Activated CD8-positive, alpha-beta T cell treated with anti-CD3 and anti-CD28 coated beads, Interleukin-2, amount 10 ng/mL, durations not matched to agents 7 days and 5 days (primary cell): ENCODE measurements at regions of chr9 and their contacts with region 1.

Region 1: DNA sequence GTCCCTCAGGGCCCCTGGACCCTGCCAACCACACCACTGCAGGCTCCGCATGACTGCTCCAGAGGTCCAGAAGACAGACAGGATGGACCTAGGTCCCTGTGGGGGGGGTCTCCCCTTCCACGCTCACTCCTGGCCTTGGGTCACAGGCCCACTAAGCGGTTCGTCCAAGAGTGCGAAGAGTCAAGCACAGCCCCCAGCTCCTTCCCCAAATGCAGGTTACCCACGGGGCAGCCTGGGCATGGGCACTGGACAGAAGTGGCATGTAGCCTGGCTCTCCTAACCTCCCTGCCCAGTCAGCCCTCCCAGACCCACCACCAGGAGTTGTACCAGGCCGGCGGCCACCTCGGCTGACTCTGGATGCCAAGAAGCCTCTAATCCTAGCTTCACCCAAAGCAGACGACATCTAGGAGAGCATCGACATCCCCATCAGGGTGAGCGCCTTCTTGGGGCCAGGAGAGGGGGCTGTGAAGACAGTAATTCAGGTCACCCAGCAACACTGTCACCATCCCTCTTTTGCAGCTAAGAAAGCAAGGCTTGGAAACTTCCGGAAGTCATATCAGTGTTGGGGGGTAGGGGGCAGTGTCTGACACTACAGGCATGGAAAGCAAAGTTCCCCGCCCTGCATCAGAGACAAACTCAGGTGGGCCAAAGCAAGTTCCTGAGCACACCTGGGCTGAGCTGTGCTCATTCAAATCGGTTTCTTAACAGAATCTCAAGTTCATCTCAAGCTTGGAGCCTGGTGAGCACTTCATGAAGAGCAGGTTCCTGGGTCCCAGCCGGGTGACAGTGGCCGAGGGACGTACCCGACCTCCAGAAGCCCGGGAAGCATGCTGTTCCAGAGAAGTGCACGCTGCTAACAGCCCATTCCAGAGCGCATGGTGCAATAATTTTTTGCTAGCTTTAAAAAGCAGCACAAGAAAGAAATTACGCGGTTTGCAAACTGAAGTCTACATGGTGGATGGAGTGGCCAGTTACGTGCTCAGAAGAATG is 68.7 kb downstream of the SEMA4D start:
- DNase-seq: peak; percentile 79
- ATAC-seq: peak; percentile 20
- H3K4me3 Mint-ChIP-seq: no peak overlapping the region
- H3K27ac Mint-ChIP-seq: peak overlapping the region; percentile 88
- H3K4me1 Mint-ChIP-seq: peaks cover 95% of the 10 kb centered on the region
- H3K27me3 Mint-ChIP-seq: no peaks in the 10 kb centered on the region

Region 2: DNA sequence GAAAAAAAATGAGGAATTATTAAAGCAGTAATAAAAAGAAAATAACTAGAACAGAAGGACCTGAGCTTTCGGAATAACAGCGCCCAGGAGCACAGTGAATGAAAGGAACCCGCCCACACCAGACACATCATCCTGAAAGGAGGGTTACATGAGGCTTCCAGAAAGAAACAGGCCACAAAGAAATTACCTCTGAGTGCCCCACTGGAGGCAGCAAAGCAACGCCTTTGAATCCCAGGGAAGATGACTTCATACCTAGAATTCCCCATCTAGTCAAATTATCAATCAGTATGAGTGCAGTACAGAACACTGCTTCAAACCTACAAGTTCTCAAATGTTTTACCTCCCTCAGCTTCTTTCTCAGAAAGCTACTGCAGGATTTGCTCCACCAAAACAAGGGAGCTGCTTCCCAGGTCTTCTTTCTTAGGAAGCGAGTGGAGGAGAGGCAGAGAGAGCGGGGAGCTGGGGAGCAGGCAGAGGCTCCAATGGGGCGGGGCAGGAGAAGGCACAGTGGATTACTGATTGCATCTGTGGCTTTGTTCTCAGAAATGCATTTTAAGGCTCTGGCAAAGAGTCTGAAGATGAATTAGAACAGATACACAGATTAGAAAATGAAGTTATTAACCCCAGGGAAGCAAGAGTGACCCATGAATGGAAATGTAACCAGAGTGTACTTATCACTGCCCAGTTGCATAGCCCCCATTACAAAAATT is 18.4 kb before region 1 on chr9:
- CTCF ChIA-PET with region 1: interaction called, 12 read pairs
- POLR2A ChIA-PET with region 1: interaction called, 6 read pairs
- DNase-seq: no peak
- ATAC-seq: peak; percentile 23
- H3K4me3 Mint-ChIP-seq: peak overlapping the region; percentile 2
- H3K27ac Mint-ChIP-seq: peak overlapping the region; percentile 78
- H3K4me1 Mint-ChIP-seq: peaks cover 97% of the 10 kb centered on the region
- H3K27me3 Mint-ChIP-seq: no peaks in the 10 kb centered on the region

Region 3: GRCh38 chr9:89442981-89443814 is 14.0 kb after region 1 on chr9:
- CTCF ChIA-PET with region 1: interaction called, 38 read pairs
- POLR2A ChIA-PET with region 1: interaction called, 4 read pairs
- DNase-seq: no peak
- ATAC-seq: no peak
- H3K4me3 Mint-ChIP-seq: no peak overlapping the region
- H3K27ac Mint-ChIP-seq: peak overlapping the region; percentile 84
- H3K4me1 Mint-ChIP-seq: peaks cover 94% of the 10 kb centered on the region
- H3K27me3 Mint-ChIP-seq: no peaks in the 10 kb centered on the region

Region 4: GRCh38 chr9:89466451-89467277 is 37.5 kb after region 1 on chr9:
- CTCF ChIA-PET with region 1: interaction called, 11 read pairs
- POLR2A ChIA-PET with region 1: no interaction called
- DNase-seq: no peak
- ATAC-seq: peak; percentile 25
- H3K4me3 Mint-ChIP-seq: peak overlapping the region; percentile 46
- H3K27ac Mint-ChIP-seq: peak overlapping the region; percentile 96
- H3K4me1 Mint-ChIP-seq: peaks cover 98% of the 10 kb centered on the region
- H3K27me3 Mint-ChIP-seq: no peaks in the 10 kb centered on the region

Region 5: GRCh38 chr9:89483592-89484522 is 54.7 kb after region 1 on chr9:
- CTCF ChIA-PET with region 1: interaction called, 17 read pairs
- POLR2A ChIA-PET with region 1: interaction called, 9 read pairs
- DNase-seq: peak; percentile 84
- ATAC-seq: peak; percentile 70
- H3K4me3 Mint-ChIP-seq: peak overlapping the region; percentile 72
- H3K27ac Mint-ChIP-seq: peak overlapping the region; percentile 96
- H3K4me1 Mint-ChIP-seq: peaks cover 90% of the 10 kb centered on the region
- H3K27me3 Mint-ChIP-seq: no peaks in the 10 kb centered on the region

Region 6: DNA sequence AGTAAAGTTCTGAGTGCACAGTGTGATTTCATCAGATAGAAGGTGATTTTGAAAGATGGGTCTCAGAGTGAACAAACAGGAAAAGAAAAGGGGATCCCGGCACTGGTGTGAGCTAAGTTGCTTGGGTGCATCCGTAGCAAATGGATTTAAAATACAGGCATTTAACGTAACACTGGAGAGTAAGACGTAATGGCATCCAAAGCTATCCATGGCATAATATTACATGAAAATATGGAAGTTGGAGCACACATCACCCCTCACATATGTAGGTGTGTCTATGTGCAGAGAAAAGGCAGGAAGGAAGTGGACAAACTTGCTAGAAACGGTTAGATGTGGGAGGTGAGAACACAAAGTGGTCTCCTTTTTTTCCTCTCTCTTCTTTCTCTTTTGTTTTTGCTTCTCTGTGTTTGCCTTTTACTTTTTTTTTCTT is 107.0 kb after region 1 on chr9:
- CTCF ChIA-PET with region 1: interaction called, 13 read pairs
- POLR2A ChIA-PET with region 1: interaction called, 3 read pairs
- DNase-seq: peak; percentile 64
- ATAC-seq: peak; percentile 78
- H3K4me3 Mint-ChIP-seq: peak overlapping the region; percentile 64
- H3K27ac Mint-ChIP-seq: peak overlapping the region; percentile 89
- H3K4me1 Mint-ChIP-seq: peaks cover 90% of the 10 kb centered on the region
- H3K27me3 Mint-ChIP-seq: no peaks in the 10 kb centered on the region